ENCODE measurements at regions of chr16 and their contacts with region 1.

Region 1: DNA sequence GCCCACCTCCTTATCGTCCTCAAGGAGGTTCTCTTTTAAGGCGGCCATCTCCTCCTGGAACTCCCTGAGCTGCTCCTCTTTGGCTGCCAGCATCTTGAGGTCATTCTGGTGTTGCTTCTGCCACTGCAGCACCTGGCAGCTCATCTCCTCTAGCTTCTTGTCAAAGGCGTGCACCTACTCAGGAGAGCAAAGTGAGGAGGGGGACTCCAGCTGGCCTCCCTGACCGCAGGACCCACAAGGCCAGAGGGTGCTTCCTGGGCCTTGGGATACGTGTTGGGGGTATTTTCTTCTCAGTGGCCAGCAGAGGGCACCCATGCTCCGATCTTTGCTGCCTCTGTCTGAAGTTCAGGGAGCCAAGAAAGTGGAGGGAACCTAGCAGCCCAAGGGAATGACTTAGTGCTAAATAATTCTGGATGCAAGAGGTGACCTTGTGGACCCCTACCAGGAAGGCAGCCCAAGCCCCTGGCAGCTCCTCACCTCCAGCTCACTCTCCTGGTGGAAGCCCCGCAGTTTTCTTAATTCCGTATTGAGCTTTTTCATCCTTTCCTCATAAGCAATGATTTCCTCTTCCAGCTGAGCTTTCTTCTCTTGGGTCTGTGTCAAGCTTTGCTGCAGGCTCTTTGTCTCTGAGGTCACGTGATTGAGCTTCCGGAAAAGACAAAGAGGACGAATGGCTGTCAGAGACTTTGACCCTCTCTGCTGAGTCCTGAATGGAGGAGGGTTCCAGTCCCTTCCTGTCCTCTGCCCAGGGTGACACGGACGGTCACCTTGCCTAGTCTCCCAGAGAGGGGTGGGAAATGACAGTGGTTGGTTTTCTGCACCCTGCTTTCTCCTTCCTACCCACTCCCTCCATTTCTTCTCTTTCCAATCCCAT is 31.4 kb downstream of the DHX38 start:
- DNase-seq: peak; percentile 87
- H3K4me3 ChIP-seq: no peak overlapping the region
- H3K27ac ChIP-seq: peak overlapping the region in 1 of 8 donors; percentile 39
- H3K4me1 ChIP-seq: peaks cover 0 to 23% (median 8%) of the 10 kb centered on the region in 6 donors
- H3K27me3 ChIP-seq: no peaks in the 10 kb centered on the region
- CTCF ChIP-seq: peak; percentile 26 to 87 (median 73)
- POLR2A ChIP-seq: no peak

Region 2: DNA sequence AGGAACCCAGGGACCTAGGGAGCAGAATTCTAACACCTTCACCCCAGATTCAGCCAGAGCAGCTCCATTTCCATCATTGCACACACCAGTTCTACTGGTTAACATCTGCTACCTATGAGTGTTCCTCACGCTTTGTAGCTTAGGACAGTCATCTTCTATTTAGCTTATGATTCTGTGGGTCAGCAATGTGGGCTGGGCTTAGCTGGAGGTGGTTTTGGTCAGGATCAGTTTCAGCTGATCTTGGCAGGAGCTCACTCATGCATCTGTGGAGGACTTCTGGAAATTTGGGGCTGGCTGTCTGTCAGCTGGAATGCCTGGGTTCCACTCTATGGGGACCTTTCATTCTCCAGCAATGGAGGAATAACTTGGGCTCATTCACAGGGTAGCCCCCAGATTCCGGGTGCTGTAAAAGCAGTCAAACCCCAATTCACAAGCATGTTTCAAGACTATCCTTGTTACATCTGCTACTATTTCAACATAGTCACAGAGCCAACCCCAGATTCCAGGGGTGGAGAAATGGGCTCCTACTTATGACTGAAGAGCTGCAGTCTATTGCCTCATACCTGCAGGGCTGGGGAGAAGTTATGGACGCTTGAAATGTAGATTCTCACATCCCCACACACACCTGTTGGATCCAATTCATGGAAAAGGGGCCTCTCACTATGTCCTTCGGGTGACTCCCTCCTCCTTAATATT is 74.1 kb before region 1 on chr16:
- intact Hi-C with region 1: no loop called
- DNase-seq: no peak
- H3K4me3 ChIP-seq: no peak overlapping the region
- H3K27ac ChIP-seq: peak overlapping the region in 4 of 8 donors; percentile 45 to 75 (median 62)
- H3K4me1 ChIP-seq: peaks cover 0 to 12% (median 2%) of the 10 kb centered on the region in 6 donors
- H3K27me3 ChIP-seq: no peaks in the 10 kb centered on the region
- CTCF ChIP-seq: no peak
- POLR2A ChIP-seq: no peak

Region 3: DNA sequence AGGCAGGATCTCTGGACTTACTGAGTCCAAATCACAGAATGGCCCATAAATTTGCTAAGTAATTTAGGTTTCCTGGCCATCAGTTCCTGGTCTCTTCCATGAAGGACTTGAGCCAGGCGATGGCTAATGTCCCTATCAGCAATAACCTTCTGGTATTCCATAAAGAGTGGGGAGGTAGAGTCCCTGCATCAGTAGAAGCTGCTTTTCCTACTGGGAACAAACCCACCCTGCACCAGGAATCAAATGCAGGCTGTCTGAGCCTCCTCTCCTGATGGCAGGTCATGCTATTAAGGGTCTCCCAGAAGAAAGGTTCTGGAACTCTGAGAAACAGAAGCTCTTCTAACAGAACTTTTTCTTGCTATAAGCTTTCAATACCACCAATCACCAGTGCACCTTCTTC is 63.4 kb before region 1 on chr16:
- intact Hi-C with region 1: no loop called
- DNase-seq: no peak
- H3K4me3 ChIP-seq: no peak overlapping the region
- H3K27ac ChIP-seq: no peak overlapping the region
- H3K4me1 ChIP-seq: peaks cover 0 to 3% (median 0%) of the 10 kb centered on the region in 6 donors
- H3K27me3 ChIP-seq: no peaks in the 10 kb centered on the region
- CTCF ChIP-seq: no peak
- POLR2A ChIP-seq: no peak

Region 4: DNA sequence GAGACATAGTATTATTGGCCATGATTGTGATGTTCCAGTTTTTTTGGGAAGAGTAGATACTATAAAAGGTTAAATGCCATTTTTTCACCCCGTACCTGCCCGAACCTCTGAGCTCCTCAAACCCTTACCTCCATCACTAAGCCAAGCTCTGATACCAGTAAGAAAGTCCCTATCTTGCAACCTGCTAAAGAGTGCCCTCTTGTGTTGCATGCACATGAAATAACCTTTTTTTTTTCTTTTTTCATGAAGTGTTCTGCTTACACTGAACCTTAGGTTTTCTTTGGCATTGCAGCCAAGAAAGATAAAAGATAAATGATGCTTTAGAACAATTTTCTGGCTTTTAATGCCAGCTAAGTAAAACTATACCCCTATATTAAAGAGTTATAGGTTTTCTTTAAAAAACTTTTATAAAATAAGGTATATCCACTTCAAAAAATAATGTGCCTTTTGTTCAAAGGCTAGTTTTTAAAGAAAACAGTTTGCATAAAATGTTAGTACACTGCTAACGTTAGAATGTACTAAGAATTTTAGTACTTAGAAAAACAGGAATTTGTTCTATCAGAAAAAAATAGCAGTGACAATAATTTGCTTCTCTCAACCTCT is 342.3 kb after region 1 on chr16:
- intact Hi-C with region 1: loop called (anchors 10 kb)
- DNase-seq: no peak
- H3K4me3 ChIP-seq: no peak overlapping the region
- H3K27ac ChIP-seq: no peak overlapping the region
- H3K4me1 ChIP-seq: no peaks in the 10 kb centered on the region
- H3K27me3 ChIP-seq: no peaks in the 10 kb centered on the region
- CTCF ChIP-seq: peak in 2 of 11 experiments; percentile 24 to 32
- POLR2A ChIP-seq: no peak

Region 5: DNA sequence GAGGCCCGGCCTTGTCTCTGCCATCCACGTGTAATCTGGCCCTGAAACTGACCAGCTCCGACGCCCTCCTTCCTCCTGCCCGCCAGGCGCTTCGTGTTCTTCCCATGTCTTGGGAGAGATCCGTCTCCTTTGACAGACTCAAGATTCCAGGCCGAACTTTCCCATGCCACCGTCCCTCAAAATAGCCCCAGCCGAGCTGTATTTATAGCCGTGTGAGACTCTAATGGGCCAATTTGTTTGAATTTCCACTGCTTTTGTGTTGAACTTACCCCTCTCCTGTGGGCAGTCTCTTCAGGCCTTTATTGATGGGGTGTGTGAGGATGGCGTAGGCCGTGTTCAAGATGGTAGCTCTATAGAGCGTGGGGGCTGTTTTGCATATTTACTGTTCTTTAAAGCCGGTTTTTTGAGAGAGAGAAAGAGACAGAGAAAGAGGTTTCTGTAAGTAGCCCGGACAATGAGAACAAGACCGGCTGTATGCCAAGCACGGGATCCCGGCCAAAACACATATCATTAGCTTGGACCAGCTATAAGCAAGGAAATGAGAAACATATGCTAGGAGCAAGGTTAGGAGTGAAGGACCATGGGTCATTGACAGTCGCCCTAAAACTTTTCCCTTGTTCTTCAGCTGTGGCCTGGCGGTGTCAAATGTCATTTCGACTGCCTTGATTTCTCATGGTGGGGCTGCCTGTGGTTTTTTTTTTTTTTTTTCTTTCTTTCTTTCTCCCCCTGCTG is 1047.4 kb after region 1 on chr16:
- intact Hi-C with region 1: no loop called
- DNase-seq: no peak
- H3K4me3 ChIP-seq: no peak overlapping the region
- H3K27ac ChIP-seq: peak overlapping the region in 5 of 8 donors; percentile 34 to 59 (median 49)
- H3K4me1 ChIP-seq: peaks cover 0 to 36% (median 9%) of the 10 kb centered on the region in 6 donors
- H3K27me3 ChIP-seq: no peaks in the 10 kb centered on the region
- CTCF ChIP-seq: peak in 1 of 11 experiments; percentile 33
- POLR2A ChIP-seq: no peak